HCT116 (cell line): ENCODE measurements at regions of chr7 and their contacts with region 1.

Region 1: GRCh38 chr7:137898839-137899721 is 52.3 kb upstream of the DGKI start:
- DNase-seq: peak; percentile 42
- ATAC-seq: peak; percentile 97
- H3K4me3 ChIP-seq: no peak overlapping the region
- H3K27ac ChIP-seq: no peak overlapping the region
- H3K4me1 ChIP-seq: no peaks in the 10 kb centered on the region
- H3K27me3 ChIP-seq: no peaks in the 10 kb centered on the region
- CTCF ChIP-seq: peak; percentile 80 to 96 (median 89)
- POLR2A ChIP-seq: no peak
- RAD21 ChIP-seq: peak; percentile 90

Region 2: GRCh38 chr7:137390076-137390475 is 509.0 kb before region 1 on chr7:
- CTCF ChIA-PET with region 1: no interaction called
- POLR2A ChIA-PET with region 1: no interaction called
- RAD21 ChIA-PET with region 1: no interaction called
- intact Hi-C with region 1: no loop called
- DNase-seq: no peak
- ATAC-seq: no peak
- H3K4me3 ChIP-seq: no peak overlapping the region
- H3K27ac ChIP-seq: no peak overlapping the region
- H3K4me1 ChIP-seq: no peaks in the 10 kb centered on the region
- H3K27me3 ChIP-seq: no peaks in the 10 kb centered on the region
- CTCF ChIP-seq: no peak
- POLR2A ChIP-seq: no peak
- RAD21 ChIP-seq: no peak

Region 3: DNA sequence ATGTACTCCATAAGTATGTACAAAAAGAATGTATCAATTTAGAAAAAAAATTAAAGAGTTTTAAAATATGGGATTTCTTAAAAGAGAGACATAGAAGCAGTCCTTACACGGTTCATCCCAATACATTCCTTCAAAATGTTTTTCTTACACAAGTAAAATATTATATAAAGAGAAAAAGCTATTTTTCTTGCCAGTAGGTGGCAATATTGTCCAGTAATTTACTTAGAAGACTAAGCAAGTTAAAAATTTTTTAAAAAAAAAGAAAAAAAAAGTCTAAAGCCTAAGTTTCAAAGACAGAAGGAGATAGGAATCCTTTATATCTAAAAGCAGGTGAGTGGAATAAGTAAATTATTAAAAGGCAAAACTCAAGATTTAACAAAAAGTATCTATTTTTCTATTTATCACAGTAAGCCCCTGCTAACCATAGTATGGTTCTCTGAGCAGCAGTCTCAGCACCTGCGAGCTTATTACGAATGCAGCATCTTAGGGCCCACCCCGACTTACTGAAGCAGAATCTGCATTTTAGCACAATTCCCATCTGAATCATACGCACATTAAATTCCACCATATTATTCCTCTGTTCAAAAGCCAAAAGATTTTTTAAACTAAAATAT is 292.9 kb before region 1 on chr7:
- CTCF ChIA-PET with region 1: interaction called, 4 read pairs
- POLR2A ChIA-PET with region 1: no interaction called
- RAD21 ChIA-PET with region 1: no interaction called
- intact Hi-C with region 1: loop called (anchors 2 kb)
- DNase-seq: peak; percentile 35
- ATAC-seq: peak; percentile 47; the same call in 1 of the 2 replicates
- H3K4me3 ChIP-seq: no peak overlapping the region
- H3K27ac ChIP-seq: no peak overlapping the region
- H3K4me1 ChIP-seq: no peaks in the 10 kb centered on the region
- H3K27me3 ChIP-seq: peaks cover 32% of the 10 kb centered on the region
- CTCF ChIP-seq: peak; percentile 21 to 45 (median 38); a peak in 3 of 6 replicates
- POLR2A ChIP-seq: no peak
- RAD21 ChIP-seq: peak; percentile 52

Region 4: DNA sequence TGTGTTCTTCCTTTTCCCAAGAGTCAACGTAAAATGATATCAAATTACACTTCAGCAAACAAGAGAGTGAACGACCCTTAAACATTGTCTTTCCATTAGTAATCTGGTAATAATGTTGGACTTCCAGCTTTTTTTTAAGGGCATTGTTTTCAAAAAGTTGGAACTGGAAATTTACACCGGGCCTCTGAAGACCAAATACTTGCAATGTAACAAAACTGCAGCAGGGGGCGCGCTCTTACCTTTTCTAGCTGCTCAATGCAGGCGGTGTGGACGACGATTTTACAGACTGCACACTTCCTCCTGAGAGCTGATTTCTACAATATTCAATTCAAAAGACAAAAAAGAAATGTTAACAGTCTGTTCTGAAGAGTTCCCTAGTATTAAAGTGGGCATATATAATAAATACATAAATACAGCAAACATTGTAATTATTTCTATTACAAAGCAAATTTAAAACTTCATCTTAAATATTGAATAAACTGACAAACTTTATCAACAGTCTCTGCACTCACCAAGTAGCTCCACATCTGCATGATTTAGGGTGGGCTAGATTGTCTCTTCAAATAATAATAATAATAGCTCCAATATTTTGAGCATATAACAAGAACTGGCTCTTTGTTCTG is 242.7 kb before region 1 on chr7:
- CTCF ChIA-PET with region 1: interaction called, 5 read pairs
- POLR2A ChIA-PET with region 1: no interaction called
- RAD21 ChIA-PET with region 1: no interaction called
- intact Hi-C with region 1: loop called (anchors 1 kb)
- DNase-seq: peak; percentile 49
- ATAC-seq: peak; percentile 88
- H3K4me3 ChIP-seq: no peak overlapping the region
- H3K27ac ChIP-seq: no peak overlapping the region
- H3K4me1 ChIP-seq: no peaks in the 10 kb centered on the region
- H3K27me3 ChIP-seq: peaks cover 16% of the 10 kb centered on the region
- CTCF ChIP-seq: peak; percentile 74 to 85 (median 78); a peak in 5 of 6 replicates
- POLR2A ChIP-seq: no peak
- RAD21 ChIP-seq: peak; percentile 81

Region 5: DNA sequence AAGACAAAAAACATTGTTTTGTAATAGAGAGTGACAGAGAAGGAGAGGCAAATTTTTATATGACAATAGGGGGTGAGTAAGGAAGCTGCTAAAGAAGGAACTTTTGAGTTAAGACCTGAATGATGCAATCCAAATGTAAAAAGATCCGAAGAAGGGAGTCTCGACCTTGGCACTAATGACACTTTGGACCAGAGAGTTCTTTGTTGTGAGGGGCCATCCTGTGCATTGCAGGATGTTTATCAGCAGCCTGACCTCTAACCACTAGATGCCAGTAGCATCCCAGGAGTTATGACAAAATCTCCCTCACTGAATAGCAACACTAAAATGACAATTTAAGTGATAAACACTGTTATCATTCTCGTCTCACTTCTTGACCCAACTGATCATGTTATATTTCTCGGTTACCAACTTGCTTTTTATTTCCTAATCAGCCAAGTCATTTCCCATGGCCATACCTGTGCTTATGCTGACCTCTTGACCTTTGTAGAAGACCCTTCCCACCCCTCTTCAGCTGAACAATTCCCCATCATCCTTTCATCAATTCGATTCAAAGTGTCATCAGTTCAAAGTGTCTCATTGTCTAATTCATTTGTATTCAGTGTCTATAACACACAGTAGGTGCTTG is 82.3 kb before region 1 on chr7:
- CTCF ChIA-PET with region 1: no interaction called
- POLR2A ChIA-PET with region 1: no interaction called
- RAD21 ChIA-PET with region 1: no interaction called
- intact Hi-C with region 1: loop called (anchors 1 kb)
- DNase-seq: no peak
- ATAC-seq: no peak
- H3K4me3 ChIP-seq: no peak overlapping the region
- H3K27ac ChIP-seq: no peak overlapping the region
- H3K4me1 ChIP-seq: no peaks in the 10 kb centered on the region
- H3K27me3 ChIP-seq: peaks cover 3% of the 10 kb centered on the region; the same call in 1 of the 2 replicates
- CTCF ChIP-seq: peak in 2 of 3 experiments; percentile 12 to 17; a peak in 2 of 6 replicates
- POLR2A ChIP-seq: no peak
- RAD21 ChIP-seq: peak; percentile 59

Region 6: GRCh38 chr7:138008547-138009349 is 109.7 kb after region 1 on chr7:
- CTCF ChIA-PET with region 1: interaction called, 56 read pairs
- POLR2A ChIA-PET with region 1: interaction called, 3 read pairs
- RAD21 ChIA-PET with region 1: interaction called, 4 to 9 read pairs
- intact Hi-C with region 1: loop called (anchors 1 kb)
- DNase-seq: peak; percentile 56
- ATAC-seq: peak; percentile 78
- H3K4me3 ChIP-seq: no peak overlapping the region
- H3K27ac ChIP-seq: no peak overlapping the region
- H3K4me1 ChIP-seq: peaks cover 3% of the 10 kb centered on the region in 2 experiments; a peak in 1 of 4 replicates
- H3K27me3 ChIP-seq: no peaks in the 10 kb centered on the region
- CTCF ChIP-seq: peak; percentile 78 to 91 (median 80)
- POLR2A ChIP-seq: no peak
- RAD21 ChIP-seq: peak; percentile 96

Region 7: GRCh38 chr7:138161600-138162081 is 262.6 kb after region 1 on chr7:
- CTCF ChIA-PET with region 1: no interaction called
- POLR2A ChIA-PET with region 1: no interaction called
- RAD21 ChIA-PET with region 1: no interaction called
- intact Hi-C with region 1: loop called (anchors 10 kb)
- DNase-seq: peak; percentile 85
- ATAC-seq: peak; percentile 98
- H3K4me3 ChIP-seq: 0 out of 4 replicates have a peak overlapping the region, but pooled peaks of 1 of the 2 experiments have one; percentile 15
- H3K27ac ChIP-seq: no peak overlapping the region
- H3K4me1 ChIP-seq: peaks cover 0 to 8% of the 10 kb centered on the region in 2 experiments; a peak in 2 of 4 replicates
- H3K27me3 ChIP-seq: no peaks in the 10 kb centered on the region
- CTCF ChIP-seq: peak; percentile 66 to 78 (median 74)
- POLR2A ChIP-seq: no peak
- RAD21 ChIP-seq: peak; percentile 86